Panc1 (cell line): ENCODE measurements at regions of chr18 and their contacts with region 1.

Region 1: DNA sequence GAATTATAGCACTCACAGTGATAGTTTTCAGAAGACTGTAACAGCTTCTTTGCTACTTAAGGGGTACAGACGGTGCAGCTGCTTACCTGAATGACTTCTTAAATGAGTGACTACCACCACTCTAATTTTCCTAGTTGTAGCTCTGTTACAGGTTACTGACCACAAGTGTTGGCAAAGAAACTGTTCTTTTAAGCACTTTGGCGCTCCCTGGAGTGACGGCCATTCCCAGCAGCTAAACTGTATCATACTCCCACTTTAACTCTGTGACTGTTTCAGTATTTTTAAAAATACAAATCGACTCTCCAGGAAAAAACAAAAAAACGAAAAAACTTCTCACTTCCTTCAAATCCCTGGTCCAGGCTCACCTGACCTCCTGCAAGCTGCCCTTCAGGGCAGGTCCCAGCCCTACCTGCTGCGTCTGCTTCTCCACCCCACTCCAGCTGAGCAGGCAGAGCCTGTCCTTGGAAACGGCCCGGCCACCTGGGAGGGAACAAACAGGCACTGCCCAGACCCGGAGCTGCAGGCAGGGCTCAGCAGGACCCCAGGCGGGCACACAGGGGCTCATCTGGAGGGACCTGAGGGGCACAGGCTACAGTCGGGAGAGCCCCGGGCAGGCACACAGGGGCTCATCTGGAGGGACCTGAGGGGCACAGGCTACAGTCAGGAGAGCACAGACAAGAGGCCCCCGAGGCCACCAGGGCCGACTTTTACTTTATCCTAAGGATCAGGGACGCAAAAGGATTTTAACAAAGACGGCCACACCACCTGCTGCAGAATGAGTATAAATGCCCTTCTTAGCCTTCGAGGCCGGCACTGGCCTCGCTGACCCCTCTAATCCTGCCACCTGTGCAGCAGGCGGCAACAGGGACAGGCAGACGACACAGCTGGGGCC is 24.5 kb downstream of the SLC66A2 start:
- DNase-seq: no peak
- ATAC-seq: 0 out of 2 replicates have a peak, but pooled peaks have one; percentile 18
- H3K4me3 ChIP-seq: no peak overlapping the region
- H3K27ac ChIP-seq: no peak overlapping the region
- H3K4me1 ChIP-seq: no peaks in the 10 kb centered on the region
- H3K27me3 ChIP-seq: no peaks in the 10 kb centered on the region
- CTCF ChIP-seq: no peak

Region 2: GRCh38 chr18:79765491-79766245 is 161.3 kb before region 1 on chr18:
- CTCF ChIA-PET with region 1: no interaction called
- POLR2A ChIA-PET with region 1: no interaction called
- in situ Hi-C with region 1: no loop called
- intact Hi-C with region 1: no loop called
- DNase-seq: no peak
- ATAC-seq: no peak; the same call in 1 of the 2 replicates
- H3K4me3 ChIP-seq: no peak overlapping the region
- H3K27ac ChIP-seq: no peak overlapping the region
- H3K4me1 ChIP-seq: no peaks in the 10 kb centered on the region
- H3K27me3 ChIP-seq: peaks cover 19% of the 10 kb centered on the region
- CTCF ChIP-seq: no peak

Region 3: DNA sequence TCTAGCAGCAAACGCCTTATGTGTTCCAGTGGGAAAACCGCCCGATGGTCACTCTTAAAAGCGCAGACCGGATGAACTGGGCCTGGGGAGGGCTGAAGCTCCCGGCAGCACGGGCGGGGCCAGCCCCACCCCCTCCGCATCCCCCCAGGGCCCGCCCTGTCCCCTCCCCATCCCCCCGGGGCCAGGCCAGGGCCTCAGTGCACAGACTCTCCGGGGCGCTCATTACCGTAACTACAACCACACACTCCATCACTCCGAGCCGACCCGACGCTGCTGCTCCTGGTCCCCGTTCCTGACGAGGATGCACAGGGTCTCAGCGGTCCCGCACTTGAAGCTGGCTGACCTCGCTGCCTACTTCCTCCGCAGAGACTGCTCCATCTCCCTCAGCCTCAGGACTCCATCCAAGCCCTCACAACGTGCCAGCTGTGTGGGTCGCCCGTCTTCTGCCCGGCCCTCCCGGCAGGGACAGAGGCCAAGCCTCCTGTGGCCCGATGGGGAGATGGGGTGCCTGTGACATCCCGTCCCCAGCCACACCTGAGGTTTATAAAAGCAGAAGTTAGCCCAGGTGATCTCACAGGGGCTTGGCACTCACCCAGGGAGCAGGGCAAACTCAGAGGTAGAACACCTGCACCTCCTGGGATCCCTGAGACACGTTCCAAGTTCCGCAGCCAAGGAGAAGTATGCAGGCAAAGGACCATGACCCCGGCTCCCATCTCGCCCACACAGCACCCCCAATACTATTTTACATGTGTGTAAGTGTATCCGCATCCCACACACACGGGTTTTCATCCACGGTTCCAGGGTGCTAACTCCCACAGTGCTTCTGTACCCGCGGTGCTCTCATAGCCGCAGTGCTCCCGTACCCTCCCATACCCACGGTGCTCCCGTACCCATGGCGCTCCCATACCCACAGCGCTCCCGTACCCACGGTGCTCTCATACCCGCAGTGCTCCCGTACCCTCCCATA is 11.5 kb before region 1 on chr18:
- CTCF ChIA-PET with region 1: no interaction called
- POLR2A ChIA-PET with region 1: interaction called, 25 read pairs
- in situ Hi-C with region 1: no loop called
- intact Hi-C with region 1: no loop called
- DNase-seq: no peak
- ATAC-seq: no peak
- H3K4me3 ChIP-seq: no peak overlapping the region
- H3K27ac ChIP-seq: no peak overlapping the region
- H3K4me1 ChIP-seq: 0 out of 2 replicates have a peak, but pooled peaks cover 3% of the 10 kb centered on the region
- H3K27me3 ChIP-seq: no peaks in the 10 kb centered on the region
- CTCF ChIP-seq: no peak

Region 4: DNA sequence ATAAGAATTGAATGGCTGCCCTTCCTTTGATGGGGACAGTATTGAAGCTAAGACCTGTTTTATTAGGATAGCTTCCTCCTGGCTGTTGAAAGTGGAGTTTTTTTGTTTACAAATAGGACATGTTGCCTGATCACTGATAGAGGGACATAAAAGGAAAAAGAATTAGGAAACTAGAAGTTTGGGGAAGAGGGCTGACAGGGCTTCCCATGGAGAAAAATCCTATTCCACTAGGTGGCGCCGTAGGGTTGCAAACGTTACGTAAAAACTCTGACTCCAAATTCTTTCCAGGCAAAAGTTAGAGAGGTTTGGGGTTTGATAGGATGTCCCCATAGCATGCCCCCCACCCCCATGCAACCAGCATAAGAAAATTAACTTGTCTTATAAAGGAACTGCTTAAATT is 96.2 kb after region 1 on chr18:
- CTCF ChIA-PET with region 1: interaction called, 12 read pairs
- POLR2A ChIA-PET with region 1: no interaction called
- in situ Hi-C with region 1: no loop called
- intact Hi-C with region 1: no loop called
- DNase-seq: no peak
- ATAC-seq: no peak
- H3K4me3 ChIP-seq: no peak overlapping the region
- H3K27ac ChIP-seq: no peak overlapping the region
- H3K4me1 ChIP-seq: no peaks in the 10 kb centered on the region
- H3K27me3 ChIP-seq: no peaks in the 10 kb centered on the region
- CTCF ChIP-seq: peak; percentile 77